GM12878 (cell line): ENCODE measurements at regions of chr16 and their contacts with region 1.

Region 1: DNA sequence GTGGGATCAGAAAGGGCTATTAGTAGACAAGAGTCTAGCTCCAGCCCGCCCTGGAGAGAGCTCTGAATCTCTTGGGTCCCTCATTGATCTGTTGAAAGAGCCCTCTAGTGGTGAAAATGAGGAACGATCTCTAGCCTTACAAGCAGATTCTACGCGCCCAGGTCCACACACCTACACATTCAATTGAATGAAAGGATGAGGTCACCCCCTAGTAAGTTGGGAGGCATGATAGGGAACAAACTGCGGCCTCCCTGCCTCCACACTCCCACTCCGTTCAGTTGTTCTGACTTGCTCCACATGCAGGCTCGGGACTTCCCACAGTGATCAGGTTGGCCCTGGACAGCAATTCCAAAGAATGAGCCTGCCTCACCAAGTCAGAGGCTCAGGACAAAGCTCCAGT is 2.9 kb upstream of the CACNG3 start:
- DNase-seq: no peak
- ATAC-seq: peak; percentile 95
- H3K4me3 ChIP-seq: no peak overlapping the region
- H3K27ac ChIP-seq: no peak overlapping the region
- H3K4me1 ChIP-seq: no peaks in the 10 kb centered on the region
- H3K27me3 ChIP-seq: peaks cover 0 to 5% of the 10 kb centered on the region in 2 experiments; a peak in 3 of 4 replicates
- CTCF ChIP-seq: peak; percentile 60 to 78 (median 71)
- EP300 ChIP-seq: no peak
- POLR2A ChIP-seq: no peak
- RAD21 ChIP-seq: peak; percentile 62

Region 2: DNA sequence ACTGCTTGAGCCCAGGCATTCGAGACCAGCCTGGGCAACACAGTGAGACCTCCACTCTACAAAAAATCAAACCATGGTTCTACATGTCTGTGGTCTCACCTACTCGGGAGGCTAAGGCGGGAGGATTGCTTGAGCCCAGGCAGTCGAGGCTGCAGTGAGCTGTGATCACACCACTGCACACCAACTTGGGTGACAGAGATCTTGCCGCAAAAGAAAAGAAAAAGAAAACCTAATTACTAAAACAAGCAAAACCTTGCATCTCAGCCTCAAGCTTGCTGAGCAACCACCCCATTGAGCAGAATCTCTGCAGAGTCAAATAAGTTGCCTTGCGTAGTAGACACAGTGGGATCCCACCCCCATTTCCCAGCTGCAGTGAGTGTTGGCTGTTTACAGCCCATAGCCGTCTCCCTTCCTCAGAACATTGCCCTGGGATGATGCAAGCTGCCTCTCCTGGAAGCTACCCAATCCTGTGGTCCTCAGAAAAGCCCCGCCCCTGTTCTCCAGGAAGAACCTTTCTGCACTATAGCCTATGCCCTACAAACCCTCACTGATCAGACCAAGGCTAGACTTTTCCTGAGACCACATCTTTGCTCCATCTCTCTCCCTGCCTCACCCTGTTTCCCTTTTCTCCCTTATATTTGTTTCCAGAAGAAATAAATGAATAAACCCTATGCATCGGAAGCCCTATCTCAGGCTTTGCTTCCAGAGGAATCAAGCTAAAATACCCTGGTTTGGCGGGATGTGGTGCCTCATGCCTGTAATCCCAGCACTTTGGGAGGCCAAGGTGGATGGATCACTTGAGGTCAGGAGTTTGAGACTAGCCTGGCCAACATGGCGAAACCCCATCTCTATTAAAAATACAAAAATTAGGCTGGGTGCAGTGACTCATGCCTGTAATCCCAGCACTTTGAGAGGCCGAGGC is 523.4 kb before region 1 on chr16:
- CTCF ChIA-PET with region 1: interaction called, 5 read pairs
- POLR2A ChIA-PET with region 1: no interaction called
- RAD21 ChIA-PET with region 1: interaction called, 5 read pairs
- SMC1A ChIA-PET with region 1: interaction called, 6 read pairs
- in situ Hi-C with region 1: loop called (anchors 10 kb)
- intact Hi-C with region 1: no loop called
- DNase-seq: no peak
- ATAC-seq: no peak
- H3K4me3 ChIP-seq: no peak overlapping the region
- H3K27ac ChIP-seq: no peak overlapping the region
- H3K4me1 ChIP-seq: peaks cover 4% of the 10 kb centered on the region; the same call in 1 of the 2 replicates
- H3K27me3 ChIP-seq: no peaks in the 10 kb centered on the region
- CTCF ChIP-seq: no peak
- EP300 ChIP-seq: no peak
- POLR2A ChIP-seq: no peak
- RAD21 ChIP-seq: no peak

Region 3: DNA sequence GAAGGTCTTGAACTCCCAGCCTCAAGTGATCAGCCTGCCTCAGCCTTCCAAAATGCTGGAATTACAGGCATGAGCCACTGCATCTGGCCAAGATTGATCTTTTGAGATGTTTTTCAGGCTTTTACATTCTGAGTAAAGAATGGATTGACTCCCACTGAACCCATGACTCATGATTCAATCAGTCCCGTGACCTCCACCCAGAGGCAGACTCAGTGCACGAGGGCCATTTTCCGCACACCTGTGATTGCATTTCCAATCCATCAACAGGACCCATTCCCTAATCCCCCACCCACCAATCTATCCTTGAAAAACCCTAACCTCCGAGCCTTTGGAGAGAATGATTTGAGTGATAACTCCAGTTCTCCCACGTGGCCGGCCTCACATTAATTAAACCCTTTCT is 457.8 kb before region 1 on chr16:
- CTCF ChIA-PET with region 1: interaction called, 32 read pairs
- POLR2A ChIA-PET with region 1: no interaction called
- RAD21 ChIA-PET with region 1: interaction called, 10 read pairs
- SMC1A ChIA-PET with region 1: interaction called, 8 read pairs
- in situ Hi-C with region 1: loop called (anchors 10 kb)
- intact Hi-C with region 1: no loop called
- DNase-seq: no peak
- ATAC-seq: no peak
- H3K4me3 ChIP-seq: no peak overlapping the region
- H3K27ac ChIP-seq: no peak overlapping the region
- H3K4me1 ChIP-seq: no peaks in the 10 kb centered on the region
- H3K27me3 ChIP-seq: no peaks in the 10 kb centered on the region
- CTCF ChIP-seq: no peak
- EP300 ChIP-seq: no peak
- POLR2A ChIP-seq: no peak
- RAD21 ChIP-seq: no peak

Region 4: GRCh38 chr16:24070851-24071250 is 182.3 kb before region 1 on chr16:
- CTCF ChIA-PET with region 1: interaction called, 27 read pairs
- POLR2A ChIA-PET with region 1: no interaction called
- RAD21 ChIA-PET with region 1: interaction called, 14 read pairs
- SMC1A ChIA-PET with region 1: interaction called, 17 read pairs
- in situ Hi-C with region 1: no loop called
- intact Hi-C with region 1: no loop called
- DNase-seq: peak; percentile 9
- ATAC-seq: peak; percentile 82
- H3K4me3 ChIP-seq: no peak overlapping the region
- H3K27ac ChIP-seq: no peak overlapping the region
- H3K4me1 ChIP-seq: peaks cover 17% of the 10 kb centered on the region
- H3K27me3 ChIP-seq: no peaks in the 10 kb centered on the region
- CTCF ChIP-seq: peak; percentile 60 to 71 (median 62)
- EP300 ChIP-seq: no peak
- POLR2A ChIP-seq: no peak
- RAD21 ChIP-seq: peak; percentile 63

Region 5: DNA sequence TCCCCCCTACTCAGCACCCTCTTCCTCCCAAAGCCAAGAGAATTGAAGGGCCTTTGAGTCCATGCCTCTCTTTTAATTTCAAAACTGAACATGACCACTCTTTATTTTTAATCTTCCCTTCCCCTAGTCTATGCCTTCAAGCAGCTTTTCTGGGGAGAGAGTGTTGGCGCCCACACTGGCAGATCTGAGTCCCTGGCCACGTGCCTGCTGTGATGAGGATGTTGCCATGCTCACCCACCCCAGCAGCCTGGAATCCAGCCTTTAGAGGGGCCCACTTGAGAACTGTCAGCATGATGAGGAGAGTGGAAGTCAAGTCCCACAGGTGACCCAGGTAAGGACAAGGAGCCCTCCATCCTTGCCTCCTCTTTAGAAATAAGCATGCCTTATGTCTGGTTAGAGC is 17.4 kb before region 1 on chr16:
- CTCF ChIA-PET with region 1: interaction called, 11 read pairs
- POLR2A ChIA-PET with region 1: no interaction called
- RAD21 ChIA-PET with region 1: no interaction called
- SMC1A ChIA-PET with region 1: interaction called, 3 read pairs
- in situ Hi-C with region 1: no loop called
- intact Hi-C with region 1: no loop called
- DNase-seq: no peak
- ATAC-seq: no peak
- H3K4me3 ChIP-seq: no peak overlapping the region
- H3K27ac ChIP-seq: no peak overlapping the region
- H3K4me1 ChIP-seq: no peaks in the 10 kb centered on the region
- H3K27me3 ChIP-seq: no peaks in the 10 kb centered on the region
- CTCF ChIP-seq: no peak
- EP300 ChIP-seq: no peak
- POLR2A ChIP-seq: no peak
- RAD21 ChIP-seq: no peak

Region 6: DNA sequence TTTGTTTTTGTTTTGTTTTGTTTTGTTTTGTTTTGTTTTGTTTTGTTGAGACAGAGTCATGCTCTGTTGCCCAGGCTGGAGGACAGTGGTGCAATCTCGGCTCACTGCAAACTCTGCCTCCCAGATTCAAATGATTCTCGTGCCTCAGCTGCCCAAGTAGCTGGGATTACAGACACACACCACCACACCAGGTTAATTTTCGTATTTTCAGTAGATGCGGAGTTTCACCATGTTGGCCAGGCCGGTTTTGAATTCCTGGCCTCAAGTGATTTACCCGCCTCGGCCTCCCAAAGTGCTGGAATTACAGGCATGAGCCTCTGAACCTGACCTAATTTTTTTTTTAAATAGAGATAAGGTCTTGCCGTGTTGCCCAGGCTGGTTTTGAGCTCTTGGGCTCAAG is 49.4 kb after region 1 on chr16:
- CTCF ChIA-PET with region 1: no interaction called
- POLR2A ChIA-PET with region 1: no interaction called
- RAD21 ChIA-PET with region 1: no interaction called
- SMC1A ChIA-PET with region 1: no interaction called
- in situ Hi-C with region 1: no loop called
- intact Hi-C with region 1: no loop called
- DNase-seq: no peak
- ATAC-seq: no peak
- H3K4me3 ChIP-seq: no peak overlapping the region
- H3K27ac ChIP-seq: no peak overlapping the region
- H3K4me1 ChIP-seq: no peaks in the 10 kb centered on the region
- H3K27me3 ChIP-seq: peaks cover 0 to 1% of the 10 kb centered on the region in 2 experiments; a peak in 1 of 4 replicates
- CTCF ChIP-seq: no peak
- EP300 ChIP-seq: no peak
- POLR2A ChIP-seq: no peak
- RAD21 ChIP-seq: no peak

Region 7: DNA sequence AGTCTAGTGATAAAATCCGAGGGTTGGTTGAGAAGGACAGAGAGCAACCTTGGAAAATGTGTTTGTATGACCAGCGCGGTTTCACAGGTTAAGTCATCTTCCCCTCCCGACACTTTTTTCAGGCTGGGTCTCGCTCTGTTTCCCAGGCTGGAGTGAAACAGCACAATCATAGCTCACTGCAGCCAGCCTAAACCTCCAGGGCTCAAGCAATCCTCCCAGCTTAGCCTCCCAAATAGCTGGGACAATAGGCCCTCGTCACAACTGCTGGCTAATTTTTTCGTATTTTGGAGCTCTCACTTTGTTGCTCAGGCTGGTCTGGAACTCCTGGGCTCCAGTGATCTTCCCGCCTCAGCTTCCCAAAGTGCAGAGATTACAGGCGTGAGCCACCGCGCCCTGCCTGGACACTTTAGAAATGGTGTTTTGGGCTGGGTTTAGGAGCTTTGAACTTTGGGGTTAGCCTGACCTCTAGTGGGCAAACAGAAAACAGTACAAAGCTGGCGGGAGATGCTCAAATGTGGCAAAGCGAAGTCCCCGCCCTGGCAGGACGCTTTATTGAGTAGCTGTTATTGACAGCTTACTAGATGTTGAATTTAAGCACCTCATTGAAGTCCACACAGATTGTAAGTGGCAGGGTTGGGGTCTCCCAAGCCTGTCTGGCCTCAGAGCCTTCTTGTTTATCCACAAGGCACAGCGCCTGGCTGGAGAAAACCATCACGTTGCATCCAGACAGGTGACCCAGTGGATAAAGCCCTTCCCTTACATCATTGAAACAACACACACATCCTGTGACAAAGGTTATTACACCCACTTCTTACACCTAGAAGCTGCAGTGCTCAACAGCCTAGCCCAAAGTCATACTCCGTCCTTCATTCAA is 251.5 kb after region 1 on chr16:
- CTCF ChIA-PET with region 1: interaction called, 17 read pairs
- POLR2A ChIA-PET with region 1: no interaction called
- RAD21 ChIA-PET with region 1: interaction called, 8 read pairs
- SMC1A ChIA-PET with region 1: interaction called, 10 read pairs
- in situ Hi-C with region 1: no loop called
- intact Hi-C with region 1: loop called (anchors 2 kb)
- DNase-seq: peak; percentile 17
- ATAC-seq: peak; percentile 98
- H3K4me3 ChIP-seq: no peak overlapping the region
- H3K27ac ChIP-seq: no peak overlapping the region
- H3K4me1 ChIP-seq: no peaks in the 10 kb centered on the region
- H3K27me3 ChIP-seq: no peaks in the 10 kb centered on the region
- CTCF ChIP-seq: peak; percentile 76 to 87 (median 79)
- EP300 ChIP-seq: no peak
- POLR2A ChIP-seq: no peak
- RAD21 ChIP-seq: peak; percentile 91